Transverse colon (tissue), 4 donors: ENCODE measurements at regions of chr12 and their contacts with region 1.

Region 1: GRCh38 chr12:89574736-89575208 is 48.9 kb upstream of the POC1B start:
- DNase-seq: no peak
- H3K4me3 ChIP-seq: no peak overlapping the region
- H3K27ac ChIP-seq: no peak overlapping the region
- H3K4me1 ChIP-seq: no peaks in the 10 kb centered on the region
- H3K27me3 ChIP-seq: no peaks in the 10 kb centered on the region
- CTCF ChIP-seq: no peak
- EP300 ChIP-seq: no peak
- POLR2A ChIP-seq: no peak

Region 2: DNA sequence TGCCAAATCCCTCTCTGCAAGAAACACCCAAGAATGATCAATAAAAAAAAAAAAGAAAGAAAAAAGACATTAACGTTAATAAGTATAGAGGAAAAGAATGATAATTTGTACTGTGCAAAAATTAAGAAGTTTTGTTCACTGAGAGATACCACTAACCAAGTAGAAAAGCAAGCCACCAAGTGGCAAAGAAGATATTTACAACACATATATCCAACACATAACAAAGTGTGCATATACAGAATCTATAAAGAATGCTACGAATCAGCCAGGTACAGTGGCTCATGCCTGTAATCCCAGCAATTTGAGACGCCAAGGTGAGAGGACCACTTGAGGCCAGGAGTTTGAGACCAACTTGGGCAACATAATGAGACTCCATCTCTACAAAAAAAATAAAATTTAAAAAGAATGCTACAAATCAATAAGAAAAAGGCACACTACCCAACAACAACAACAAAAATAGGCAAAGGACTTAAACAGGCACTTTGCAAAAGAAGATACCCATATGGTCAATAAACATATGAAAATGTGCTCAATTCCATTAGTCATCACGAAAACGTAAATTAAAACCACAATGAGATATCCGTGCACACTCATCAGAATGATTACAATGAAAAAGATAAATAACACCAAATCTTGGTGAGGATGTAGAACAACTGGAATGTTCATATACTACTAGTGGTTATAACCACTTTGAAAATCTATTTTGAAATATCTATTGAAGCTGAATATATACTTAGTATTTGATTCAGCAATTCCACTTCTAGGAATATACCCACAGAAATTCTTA is 70.0 kb before region 1 on chr12:
- in situ Hi-C with region 1: no loop called
- intact Hi-C with region 1: no loop called
- DNase-seq: no peak
- H3K4me3 ChIP-seq: no peak overlapping the region
- H3K27ac ChIP-seq: no peak overlapping the region
- H3K4me1 ChIP-seq: peaks cover 0 to 21% (median 15%) of the 10 kb centered on the region in 4 donors
- H3K27me3 ChIP-seq: no peaks in the 10 kb centered on the region
- CTCF ChIP-seq: no peak
- EP300 ChIP-seq: no peak
- POLR2A ChIP-seq: no peak

Region 3: DNA sequence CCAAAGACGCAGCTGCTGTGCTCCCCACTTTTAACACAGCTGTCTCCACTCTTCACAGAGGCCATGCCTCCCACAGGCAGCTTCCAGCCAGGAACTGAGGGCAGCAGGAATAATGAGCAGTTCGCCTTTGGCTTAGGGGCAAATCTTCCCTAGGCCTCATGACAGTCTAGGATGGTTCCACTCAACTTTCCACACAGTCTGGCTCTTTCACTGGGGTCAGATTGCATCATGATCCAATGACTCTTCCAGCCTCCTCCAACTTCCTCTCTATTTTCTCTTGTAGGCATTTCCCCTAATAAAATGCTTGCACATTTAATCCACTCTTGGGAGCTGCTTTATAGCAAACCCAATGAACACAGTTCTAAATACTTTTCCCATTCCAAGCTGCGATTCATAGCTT is 405.5 kb after region 1 on chr12:
- in situ Hi-C with region 1: loop called in 1 of 4 experiments (anchors 25 kb)
- intact Hi-C with region 1: no loop called
- DNase-seq: no peak
- H3K4me3 ChIP-seq: no peak overlapping the region
- H3K27ac ChIP-seq: no peak overlapping the region
- H3K4me1 ChIP-seq: no peaks in the 10 kb centered on the region
- H3K27me3 ChIP-seq: no peaks in the 10 kb centered on the region
- CTCF ChIP-seq: no peak
- EP300 ChIP-seq: no peak
- POLR2A ChIP-seq: no peak

Region 4: DNA sequence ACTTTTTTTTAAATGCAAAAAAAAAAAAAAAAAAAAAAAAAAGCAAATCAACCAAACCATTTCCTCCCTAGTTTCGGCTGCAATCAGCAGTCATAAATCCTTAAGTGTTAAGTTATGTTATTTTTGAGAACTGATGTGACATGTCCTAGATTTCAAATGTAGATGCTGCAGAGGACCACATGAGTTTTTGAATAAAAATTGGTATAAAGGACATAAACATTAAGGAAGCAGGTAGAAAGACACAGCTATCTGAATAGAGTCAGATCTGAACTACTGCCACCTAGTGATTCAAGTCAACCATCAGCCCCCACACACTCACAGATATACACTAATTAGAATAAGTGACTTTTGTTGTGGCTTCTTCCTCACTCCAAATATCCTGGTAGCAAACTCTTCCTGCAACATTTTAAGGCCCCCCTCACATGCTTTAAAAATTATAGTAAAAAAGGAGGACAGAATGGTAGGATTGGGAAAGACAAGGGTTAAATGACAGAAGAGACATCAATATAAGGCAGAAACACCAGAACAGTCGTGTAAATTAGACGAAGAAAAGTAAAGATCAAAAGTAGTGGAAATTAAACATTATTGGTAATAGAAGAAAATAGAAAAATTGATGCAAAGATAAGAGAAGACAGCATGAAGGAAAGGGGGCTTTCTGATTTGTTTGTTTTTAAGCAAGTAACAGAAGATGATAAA is 528.3 kb after region 1 on chr12:
- in situ Hi-C with region 1: loop called in 1 of 4 experiments (anchors 25 kb)
- intact Hi-C with region 1: no loop called
- DNase-seq: peak; percentile 13
- H3K4me3 ChIP-seq: no peak overlapping the region
- H3K27ac ChIP-seq: no peak overlapping the region
- H3K4me1 ChIP-seq: no peaks in the 10 kb centered on the region
- H3K27me3 ChIP-seq: no peaks in the 10 kb centered on the region
- CTCF ChIP-seq: peak; percentile 41 to 54 (median 48)
- EP300 ChIP-seq: no peak
- POLR2A ChIP-seq: no peak

Region 5: DNA sequence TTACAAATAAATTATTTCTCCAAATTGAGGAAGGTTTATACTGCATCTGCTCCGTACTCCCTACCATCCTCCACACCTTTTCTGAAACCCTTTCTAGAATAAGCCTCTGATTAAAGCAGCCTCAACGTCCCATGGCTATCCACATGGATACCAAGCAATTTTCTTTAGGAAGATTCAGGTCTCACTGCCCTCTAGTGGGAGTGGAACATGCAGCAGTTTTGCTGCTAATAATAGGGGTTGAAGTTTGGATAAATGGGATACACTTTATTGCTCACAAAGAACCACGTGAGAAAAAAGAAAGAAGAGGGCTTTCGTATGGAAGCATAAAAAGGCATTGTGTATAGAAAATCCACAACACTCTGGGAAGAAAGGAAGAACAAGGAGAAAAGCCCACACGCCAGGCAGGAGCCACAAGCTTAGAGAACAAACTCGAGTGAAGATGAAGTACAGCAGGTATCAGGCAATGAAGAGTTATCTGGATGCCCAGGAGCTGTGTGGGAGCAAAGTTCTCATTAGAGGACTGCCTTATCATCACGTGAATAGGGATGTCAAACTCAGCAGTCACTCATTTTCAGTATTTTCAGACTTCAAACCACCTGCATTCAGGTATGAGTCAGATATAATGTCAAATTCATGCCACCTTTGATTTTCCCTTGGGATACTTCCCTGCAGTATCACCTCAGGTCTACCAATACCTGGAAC is 1334.4 kb after region 1 on chr12:
- in situ Hi-C with region 1: loop called in 1 of 4 experiments (anchors 25 kb)
- intact Hi-C with region 1: no loop called
- DNase-seq: no peak
- H3K4me3 ChIP-seq: no peak overlapping the region
- H3K27ac ChIP-seq: no peak overlapping the region
- H3K4me1 ChIP-seq: no peaks in the 10 kb centered on the region
- H3K27me3 ChIP-seq: no peaks in the 10 kb centered on the region
- CTCF ChIP-seq: peak; percentile 46 to 63 (median 59)
- EP300 ChIP-seq: no peak
- POLR2A ChIP-seq: no peak

Region 6: DNA sequence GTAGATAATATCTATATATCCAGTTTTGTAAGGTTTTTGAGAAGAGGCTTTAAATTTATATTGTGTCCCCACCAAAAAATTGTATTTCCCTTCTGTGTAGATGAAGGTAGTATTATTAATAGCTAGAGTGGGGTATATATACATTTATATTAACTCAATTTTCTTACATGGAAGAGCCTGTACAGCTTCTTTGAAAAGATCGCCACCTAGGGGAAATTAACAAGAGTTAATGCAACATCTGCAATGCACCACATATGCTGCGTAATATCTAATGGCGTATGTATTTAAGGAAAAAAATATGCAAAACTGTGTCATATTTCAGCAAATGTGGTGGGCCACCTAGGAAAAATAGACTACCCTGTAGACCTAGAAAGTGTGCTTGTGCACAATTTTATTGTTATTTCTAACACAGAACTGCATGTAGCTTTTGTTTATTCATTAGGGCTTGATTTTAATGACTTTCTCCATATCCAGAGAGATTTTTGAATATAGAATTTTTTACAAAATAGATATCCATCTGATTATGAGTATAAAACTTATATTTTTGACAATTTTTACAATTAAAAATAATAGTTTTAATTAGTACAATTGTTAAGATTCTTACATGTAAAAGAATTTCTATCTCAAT is 1366.2 kb after region 1 on chr12:
- in situ Hi-C with region 1: loop called in 1 of 4 experiments (anchors 25 kb)
- intact Hi-C with region 1: no loop called
- DNase-seq: no peak
- H3K4me3 ChIP-seq: no peak overlapping the region
- H3K27ac ChIP-seq: no peak overlapping the region
- H3K4me1 ChIP-seq: no peaks in the 10 kb centered on the region
- H3K27me3 ChIP-seq: no peaks in the 10 kb centered on the region
- CTCF ChIP-seq: peak; percentile 34 to 52 (median 42)
- EP300 ChIP-seq: no peak
- POLR2A ChIP-seq: no peak